ENCODE measurements at regions of chr5 and their contacts with region 1.

Region 1: DNA sequence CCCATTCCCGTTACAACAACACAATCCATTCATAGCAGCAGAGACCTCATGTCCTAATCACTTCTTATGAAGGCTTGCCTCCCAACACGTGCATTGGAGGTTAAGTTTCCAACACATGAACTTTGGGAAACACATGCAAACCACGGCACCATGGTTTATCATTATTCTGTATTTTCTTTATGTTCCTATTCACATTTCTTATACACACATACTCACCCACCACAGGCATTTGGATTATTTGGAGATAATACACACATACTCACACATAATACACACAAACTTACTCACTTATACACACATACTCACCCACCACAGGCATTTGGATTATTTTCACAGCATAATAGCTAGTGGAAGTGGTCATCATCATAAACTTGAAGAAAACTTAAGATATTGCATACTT is 75.6 kb downstream of the C7 start:
- DNase-seq: peak; percentile 96
- ATAC-seq: peak; percentile 96
- H3K4me3 ChIP-seq: no peak overlapping the region
- H3K27ac ChIP-seq: peak overlapping the region; percentile 73
- H3K4me1 ChIP-seq: peaks cover 58% of the 10 kb centered on the region
- H3K27me3 ChIP-seq: no peaks in the 10 kb centered on the region
- CTCF ChIP-seq: no peak

Region 2: DNA sequence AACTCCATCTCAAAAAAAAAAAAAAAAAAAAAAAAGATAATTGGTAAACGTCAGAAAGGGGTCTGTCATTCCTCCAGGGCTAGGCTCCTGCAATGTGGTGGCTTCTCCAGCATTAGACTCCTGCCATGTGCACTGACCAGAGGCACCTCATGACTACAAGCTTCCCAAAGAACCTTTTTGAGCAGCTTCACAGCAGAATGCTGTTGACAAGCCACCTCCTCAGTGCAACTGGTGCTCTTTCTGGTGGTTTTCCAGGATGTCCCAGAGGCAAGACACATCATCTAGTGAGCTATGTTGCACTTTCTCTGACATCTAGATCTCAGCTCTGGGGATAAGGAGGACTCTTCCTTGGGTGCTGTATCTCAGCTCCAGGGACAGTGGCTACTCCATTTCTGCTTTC is 161.4 kb before region 1 on chr5:
- CTCF ChIA-PET with region 1: interaction called, 11 read pairs
- POLR2A ChIA-PET with region 1: no interaction called
- intact Hi-C with region 1: no loop called
- DNase-seq: no peak
- ATAC-seq: peak; percentile 36
- H3K4me3 ChIP-seq: no peak overlapping the region
- H3K27ac ChIP-seq: no peak overlapping the region
- H3K4me1 ChIP-seq: no peaks in the 10 kb centered on the region
- H3K27me3 ChIP-seq: no peaks in the 10 kb centered on the region
- CTCF ChIP-seq: no peak

Region 3: GRCh38 chr5:40841068-40841805 is 143.6 kb before region 1 on chr5 and contains the start of gene CARD6:
- CTCF ChIA-PET with region 1: no interaction called
- POLR2A ChIA-PET with region 1: no interaction called
- intact Hi-C with region 1: no loop called
- DNase-seq: peak; percentile 35
- ATAC-seq: no peak; the same call in 1 of the 2 replicates
- H3K4me3 ChIP-seq: peak within 1 kb of the TSS; percentile 58
- H3K27ac ChIP-seq: peak within 1 kb of the TSS; percentile 39
- H3K4me1 ChIP-seq: peaks cover 26% of the 10 kb centered on the region
- H3K27me3 ChIP-seq: no peaks in the 10 kb centered on the region
- CTCF ChIP-seq: peak; percentile 43; the same call in 1 of the 2 replicates
- total RNA-seq, gene CARD6: 1.3 and 2.4 TPM in 2 replicates

Region 4: GRCh38 chr5:40945111-40945510 is 39.8 kb before region 1 on chr5:
- CTCF ChIA-PET with region 1: no interaction called
- POLR2A ChIA-PET with region 1: no interaction called
- intact Hi-C with region 1: no loop called
- DNase-seq: no peak
- ATAC-seq: no peak
- H3K4me3 ChIP-seq: no peak overlapping the region
- H3K27ac ChIP-seq: no peak overlapping the region
- H3K4me1 ChIP-seq: no peaks in the 10 kb centered on the region
- H3K27me3 ChIP-seq: no peaks in the 10 kb centered on the region
- CTCF ChIP-seq: no peak

Region 5: GRCh38 chr5:41009232-41009631 is 24.3 kb after region 1 on chr5:
- CTCF ChIA-PET with region 1: no interaction called
- POLR2A ChIA-PET with region 1: no interaction called
- intact Hi-C with region 1: loop called (anchors 1 kb)
- DNase-seq: peak; percentile 99
- ATAC-seq: peak; percentile 96
- H3K4me3 ChIP-seq: no peak overlapping the region
- H3K27ac ChIP-seq: peak overlapping the region; percentile 56
- H3K4me1 ChIP-seq: peaks cover 21% of the 10 kb centered on the region
- H3K27me3 ChIP-seq: no peaks in the 10 kb centered on the region
- CTCF ChIP-seq: no peak

Region 6: GRCh38 chr5:41115281-41115680 is 130.4 kb after region 1 on chr5:
- CTCF ChIA-PET with region 1: no interaction called
- POLR2A ChIA-PET with region 1: interaction called, 8 read pairs
- intact Hi-C with region 1: loop called (anchors 5 kb)
- DNase-seq: peak; percentile 51
- ATAC-seq: no peak
- H3K4me3 ChIP-seq: no peak overlapping the region
- H3K27ac ChIP-seq: no peak overlapping the region
- H3K4me1 ChIP-seq: 0 out of 2 replicates have a peak, but pooled peaks cover 5% of the 10 kb centered on the region
- H3K27me3 ChIP-seq: no peaks in the 10 kb centered on the region
- CTCF ChIP-seq: no peak

Region 7: DNA sequence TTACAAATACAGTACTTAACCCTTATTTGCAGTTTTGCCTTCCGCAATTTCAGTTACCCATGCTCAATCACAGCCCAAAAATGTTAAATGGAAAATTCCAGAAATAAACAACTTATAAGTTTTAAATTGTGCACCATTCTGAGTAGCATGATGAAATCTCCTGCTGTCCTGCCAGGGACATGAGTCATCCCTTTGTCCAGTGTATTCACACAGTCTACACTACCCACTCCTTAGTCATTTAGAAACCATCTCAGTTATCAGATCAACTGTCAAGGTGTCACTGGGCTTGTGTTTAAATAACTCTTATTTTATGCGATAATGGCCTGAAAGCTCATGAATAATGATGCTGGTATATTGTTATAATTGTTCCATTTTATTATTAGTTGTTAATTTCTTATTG is 429.7 kb after region 1 on chr5:
- CTCF ChIA-PET with region 1: no interaction called
- POLR2A ChIA-PET with region 1: no interaction called
- intact Hi-C with region 1: loop called (anchors 10 kb)
- DNase-seq: peak; percentile 98
- ATAC-seq: peak; percentile 68
- H3K4me3 ChIP-seq: no peak overlapping the region
- H3K27ac ChIP-seq: peak overlapping the region; percentile 91
- H3K4me1 ChIP-seq: peaks cover 83% of the 10 kb centered on the region
- H3K27me3 ChIP-seq: no peaks in the 10 kb centered on the region
- CTCF ChIP-seq: no peak

Measured in PC-3 (cell line).